Mucosa of descending colon (tissue), 3 donors: ENCODE measurements at regions of chr11 and their contacts with region 1.

Region 1: DNA sequence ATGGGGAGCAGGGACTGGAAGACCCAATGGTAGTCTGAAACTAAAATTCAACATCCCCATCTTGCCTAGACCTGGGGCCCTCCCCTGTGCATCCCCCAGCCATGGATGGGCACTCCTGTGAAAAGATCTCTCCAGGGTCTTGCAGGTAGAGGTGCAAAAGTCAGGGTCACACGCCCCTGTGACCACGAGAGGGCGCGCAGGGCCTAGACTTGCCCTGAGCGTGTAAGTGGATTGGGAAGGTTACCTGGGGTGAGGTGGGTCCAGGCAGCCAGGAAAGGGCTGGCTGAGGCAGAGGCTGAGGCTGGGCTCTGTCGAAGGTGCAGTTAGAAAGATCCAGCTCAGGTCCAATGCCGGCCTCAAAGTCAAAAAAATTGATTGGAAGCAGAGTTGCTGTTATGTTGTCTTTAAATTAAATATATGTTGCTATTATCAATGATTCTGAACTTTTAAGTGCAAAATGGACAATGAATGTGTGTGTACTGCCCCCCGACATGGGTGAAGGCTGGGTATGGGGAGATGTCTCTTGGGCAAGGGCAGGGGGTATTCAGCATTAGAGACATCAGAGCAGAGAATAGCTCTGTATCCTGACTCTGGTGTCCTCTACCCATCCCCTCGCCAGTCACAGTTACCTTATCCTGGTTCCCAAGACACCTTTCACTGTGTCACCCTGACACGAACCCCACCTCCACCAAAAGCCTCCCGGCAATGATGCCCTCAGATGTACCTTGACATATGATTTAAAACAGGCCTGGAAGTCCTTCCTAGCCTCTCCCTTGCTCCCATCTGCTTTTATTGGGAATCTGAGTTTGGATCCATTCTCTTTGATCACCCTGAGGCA is 4.7 kb upstream of the POU2F3 start:
- DNase-seq: peak in 2 of 3 donors; percentile 83 to 84
- ATAC-seq: peak; percentile 69
- H3K4me3 ChIP-seq: no peak overlapping the region
- H3K4me1 ChIP-seq: peaks cover 7% of the 10 kb centered on the region
- CTCF ChIP-seq: peak; percentile 66

Region 2: DNA sequence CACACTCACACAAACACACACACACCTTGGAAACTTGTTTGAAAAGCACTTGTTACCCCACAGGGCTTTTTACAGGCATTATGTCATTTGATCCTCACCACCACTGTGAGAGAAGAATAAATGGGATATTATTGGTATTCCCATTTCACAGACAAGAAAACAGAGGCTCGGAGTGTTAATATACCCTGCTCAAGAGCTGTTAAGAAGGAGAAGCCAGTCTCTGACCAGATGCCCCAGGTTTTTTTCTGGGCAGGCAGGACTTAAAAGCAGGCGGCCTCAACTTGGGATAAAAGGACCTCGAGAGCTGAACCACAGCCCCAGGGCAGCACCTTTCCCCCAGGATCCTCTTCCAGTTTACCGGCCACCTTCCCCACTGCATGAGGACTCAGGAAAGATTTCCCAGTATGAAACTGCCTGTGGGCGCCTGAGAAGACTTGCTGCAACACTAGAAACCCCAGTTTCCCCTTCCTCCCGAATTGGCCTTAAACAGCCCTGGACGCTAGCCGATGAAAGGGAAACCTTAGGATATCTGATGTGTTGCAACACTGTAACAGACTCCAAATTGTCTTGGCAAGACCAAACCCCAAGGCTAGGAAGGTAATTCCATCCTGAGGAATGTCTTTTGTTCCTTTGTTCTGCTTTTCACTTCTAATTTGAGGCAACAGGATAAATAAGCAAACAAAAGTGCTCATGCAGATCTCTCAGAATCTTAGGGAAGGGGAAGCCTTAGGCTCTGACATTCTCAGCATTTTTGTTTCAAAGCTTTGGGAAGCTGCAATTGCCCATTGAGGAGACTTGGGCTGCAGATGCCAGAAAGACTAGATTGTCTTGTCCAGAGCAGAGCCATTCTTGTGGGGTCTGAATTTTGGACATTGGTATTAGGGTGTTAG is 270.9 kb before region 1 on chr11:
- intact Hi-C with region 1: no loop called
- DNase-seq: no peak
- ATAC-seq: no peak
- H3K4me3 ChIP-seq: no peak overlapping the region
- H3K4me1 ChIP-seq: no peaks in the 10 kb centered on the region
- CTCF ChIP-seq: no peak

Region 3: GRCh38 chr11:120303004-120303637 is 67.9 kb after region 1 on chr11:
- intact Hi-C with region 1: loop called in 1 of 2 experiments (anchors 2 kb)
- DNase-seq: peak in 2 of 3 donors; percentile 64 to 92
- ATAC-seq: peak; percentile 77
- H3K4me3 ChIP-seq: no peak overlapping the region
- H3K4me1 ChIP-seq: peaks cover 23% of the 10 kb centered on the region
- CTCF ChIP-seq: peak; percentile 76

Region 4: GRCh38 chr11:120324932-120325810 is 89.9 kb after region 1 on chr11 and contains the start of gene TLCD5:
- intact Hi-C with region 1: no loop called
- DNase-seq: peak in 2 of 3 donors; percentile 65 to 67
- ATAC-seq: peak; percentile 75
- H3K4me3 ChIP-seq: peak within 1 kb of the TSS; percentile 17
- H3K4me1 ChIP-seq: peaks cover 14% of the 10 kb centered on the region
- CTCF ChIP-seq: no peak
- total RNA-seq, gene TLCD5: 0.46 to 3.8 (median 0.51) TPM